ENCODE measurements at regions of chr21 and their contacts with region 1.

Region 1: GRCh38 chr21:33199516-33200217 is 30.1 kb upstream of the IFNAR2 start:
- DNase-seq: peak in 1 of 2 donors; percentile 93
- H3K4me3 ChIP-seq: no peak overlapping the region
- H3K27ac ChIP-seq: no peak overlapping the region
- H3K4me1 ChIP-seq: peaks cover 2 to 6% of the 10 kb centered on the region in 2 donors
- H3K27me3 ChIP-seq: no peaks in the 10 kb centered on the region
- CTCF ChIP-seq: peak; percentile 60 to 85 (median 75)

Region 2: DNA sequence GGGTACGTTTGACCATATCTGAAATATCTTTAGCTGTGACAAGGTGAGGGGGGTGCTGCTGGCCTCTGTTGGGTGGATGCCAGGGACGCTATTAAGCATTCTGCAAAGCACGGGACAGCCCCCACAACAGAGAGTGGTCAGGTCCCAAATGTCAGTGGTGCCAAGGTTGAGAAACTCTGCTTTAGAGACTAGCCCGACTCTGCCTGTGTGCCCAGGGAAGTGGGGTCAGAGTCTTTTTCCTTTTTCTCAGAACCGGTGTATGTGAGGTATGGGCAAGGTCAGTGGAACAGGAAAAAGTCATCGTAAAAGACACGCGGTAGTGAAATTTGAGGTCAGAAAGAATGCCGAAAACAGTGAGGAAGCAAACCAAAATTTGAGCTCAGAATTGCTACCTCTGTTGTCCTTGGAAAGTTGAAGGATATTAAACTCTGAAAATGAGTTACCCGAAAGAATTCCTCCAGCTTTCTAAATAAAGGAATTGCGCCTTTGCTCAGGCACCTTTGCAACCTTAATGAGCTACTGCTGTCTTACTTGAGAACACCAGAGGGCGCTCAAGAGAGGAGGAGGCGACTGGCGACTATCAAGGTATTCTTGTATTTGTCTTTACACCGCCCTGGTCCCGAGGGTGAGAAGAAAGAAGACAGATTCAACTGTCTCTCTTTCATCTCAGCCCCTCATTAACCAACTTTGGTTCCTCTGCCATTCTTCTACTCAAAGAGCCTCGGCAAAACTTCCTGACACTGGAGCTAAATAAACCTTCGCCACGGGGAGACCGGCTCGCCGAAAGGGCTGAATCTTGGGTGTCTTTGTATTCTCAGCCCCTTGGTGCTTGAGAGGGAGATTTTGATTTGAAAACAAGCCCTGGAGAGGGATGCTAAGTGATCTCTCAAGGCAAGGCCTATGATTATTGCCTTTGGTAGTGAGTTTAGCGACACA is 259.3 kb before region 1 on chr21:
- intact Hi-C with region 1: loop called (anchors 1 kb)
- DNase-seq: no peak
- H3K4me3 ChIP-seq: no peak overlapping the region
- H3K27ac ChIP-seq: no peak overlapping the region
- H3K4me1 ChIP-seq: no peaks in the 10 kb centered on the region
- H3K27me3 ChIP-seq: no peaks in the 10 kb centered on the region
- CTCF ChIP-seq: peak; percentile 30 to 53 (median 39)

Region 3: GRCh38 chr21:33266050-33266788 is 66.6 kb after region 1 on chr21 and contains the start of gene IL10RB:
- intact Hi-C with region 1: loop called (anchors 5 kb)
- DNase-seq: peak in 1 of 2 donors; percentile 85
- H3K4me3 ChIP-seq: peak within 1 kb of the TSS; percentile 76 to 89
- H3K27ac ChIP-seq: peak within 1 kb of the TSS; percentile 84
- H3K4me1 ChIP-seq: peaks cover 0 to 10% of the 10 kb centered on the region in 2 donors
- H3K27me3 ChIP-seq: no peaks in the 10 kb centered on the region
- CTCF ChIP-seq: no peak
- total RNA-seq, gene IL10RB: 39.1 TPM

Region 4: DNA sequence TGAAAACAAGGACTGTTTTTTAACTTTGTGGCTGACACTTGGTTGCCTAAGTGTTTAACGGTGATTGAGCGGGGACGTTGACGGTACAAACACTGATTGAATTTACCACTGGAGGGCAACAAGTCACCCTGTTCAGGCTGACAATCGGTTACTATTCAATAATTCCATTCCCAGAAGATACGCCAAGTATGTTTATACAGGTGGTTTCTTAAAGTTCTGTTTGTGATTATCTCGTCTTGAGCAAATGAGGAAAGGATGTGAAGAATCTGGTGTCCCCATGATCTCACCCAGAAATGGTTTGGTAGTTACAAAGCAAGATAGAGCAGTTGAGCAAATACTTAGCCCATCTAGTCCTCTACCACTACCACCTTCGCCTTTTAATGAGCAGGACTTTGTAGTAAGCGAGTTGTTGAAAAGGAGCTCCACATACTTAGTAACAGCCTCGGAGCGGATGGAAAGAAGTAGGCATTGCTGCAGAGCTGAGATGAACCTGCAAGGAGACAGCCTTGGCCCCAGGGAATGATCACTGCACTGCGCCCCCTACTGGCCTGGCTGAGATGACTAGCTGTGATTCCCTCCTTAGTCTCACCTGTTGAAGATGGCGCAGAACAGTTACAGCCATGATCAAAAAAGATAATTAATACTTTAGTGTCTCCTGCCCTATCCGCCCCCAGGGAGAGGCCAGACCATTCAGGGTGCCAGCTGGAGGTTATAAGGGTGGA is 161.4 kb after region 1 on chr21:
- intact Hi-C with region 1: loop called (anchors 1 kb)
- DNase-seq: peak; percentile 16 to 84
- H3K4me3 ChIP-seq: peak overlapping the region; percentile 2 to 18
- H3K27ac ChIP-seq: peak overlapping the region; percentile 52 to 56
- H3K4me1 ChIP-seq: peaks cover 10 to 16% of the 10 kb centered on the region in 2 donors
- H3K27me3 ChIP-seq: no peaks in the 10 kb centered on the region
- CTCF ChIP-seq: peak; percentile 57 to 74 (median 69)

Region 5: DNA sequence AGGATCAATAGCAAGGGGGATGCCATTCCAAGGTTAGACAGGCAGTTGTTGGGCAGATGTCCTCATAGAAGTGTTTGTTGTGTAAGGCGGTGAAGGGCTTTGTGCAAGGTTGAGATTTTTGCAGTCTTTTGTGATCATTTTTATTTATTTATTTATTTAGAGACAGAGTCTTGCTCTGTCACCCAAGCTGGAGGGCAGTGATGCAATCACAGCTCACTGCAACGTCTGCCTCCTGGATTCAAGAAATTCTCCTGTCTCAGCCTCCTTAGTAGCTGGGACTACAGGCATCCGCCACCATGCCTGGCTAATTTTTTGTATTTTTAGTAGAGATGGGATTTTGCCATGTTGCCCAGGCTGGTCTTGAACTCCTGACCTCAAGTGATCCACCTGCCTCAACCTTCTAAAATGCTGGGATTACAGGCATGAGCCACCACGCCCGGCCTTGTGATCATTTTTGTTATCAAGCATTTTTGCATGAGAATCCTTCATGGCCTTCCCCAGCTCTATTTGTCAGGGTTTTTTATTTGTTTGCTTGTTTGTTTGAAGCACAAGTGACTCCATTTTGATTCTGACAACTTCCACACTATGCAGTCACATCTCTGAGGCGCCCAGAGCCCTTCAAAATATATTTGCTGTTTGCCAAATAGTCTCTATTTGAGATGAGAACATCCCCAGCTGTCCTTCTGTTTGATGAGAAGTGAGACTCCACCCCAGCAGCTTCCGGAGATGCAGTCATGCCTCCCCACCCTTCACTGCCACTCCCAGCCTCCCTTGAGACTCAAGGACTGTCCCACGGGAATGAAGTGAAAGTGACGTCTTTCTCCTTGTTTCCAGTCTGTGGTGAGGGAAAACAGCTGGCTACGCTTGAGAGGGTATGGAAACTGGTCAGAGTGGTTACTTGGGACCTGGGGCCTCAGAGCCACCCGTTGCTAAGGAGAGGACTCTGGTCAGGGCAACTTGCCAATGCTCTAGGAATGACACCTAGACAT is 242.1 kb after region 1 on chr21:
- intact Hi-C with region 1: loop called (anchors 1 kb)
- DNase-seq: peak in 1 of 2 donors; percentile 70
- H3K4me3 ChIP-seq: no peak overlapping the region
- H3K27ac ChIP-seq: peak overlapping the region; percentile 14 to 37
- H3K4me1 ChIP-seq: peaks cover 0 to 7% of the 10 kb centered on the region in 2 donors
- H3K27me3 ChIP-seq: no peaks in the 10 kb centered on the region
- CTCF ChIP-seq: no peak